Caco-2 (cell line): ENCODE measurements at regions of chr3 and their contacts with region 1.

Region 1: DNA sequence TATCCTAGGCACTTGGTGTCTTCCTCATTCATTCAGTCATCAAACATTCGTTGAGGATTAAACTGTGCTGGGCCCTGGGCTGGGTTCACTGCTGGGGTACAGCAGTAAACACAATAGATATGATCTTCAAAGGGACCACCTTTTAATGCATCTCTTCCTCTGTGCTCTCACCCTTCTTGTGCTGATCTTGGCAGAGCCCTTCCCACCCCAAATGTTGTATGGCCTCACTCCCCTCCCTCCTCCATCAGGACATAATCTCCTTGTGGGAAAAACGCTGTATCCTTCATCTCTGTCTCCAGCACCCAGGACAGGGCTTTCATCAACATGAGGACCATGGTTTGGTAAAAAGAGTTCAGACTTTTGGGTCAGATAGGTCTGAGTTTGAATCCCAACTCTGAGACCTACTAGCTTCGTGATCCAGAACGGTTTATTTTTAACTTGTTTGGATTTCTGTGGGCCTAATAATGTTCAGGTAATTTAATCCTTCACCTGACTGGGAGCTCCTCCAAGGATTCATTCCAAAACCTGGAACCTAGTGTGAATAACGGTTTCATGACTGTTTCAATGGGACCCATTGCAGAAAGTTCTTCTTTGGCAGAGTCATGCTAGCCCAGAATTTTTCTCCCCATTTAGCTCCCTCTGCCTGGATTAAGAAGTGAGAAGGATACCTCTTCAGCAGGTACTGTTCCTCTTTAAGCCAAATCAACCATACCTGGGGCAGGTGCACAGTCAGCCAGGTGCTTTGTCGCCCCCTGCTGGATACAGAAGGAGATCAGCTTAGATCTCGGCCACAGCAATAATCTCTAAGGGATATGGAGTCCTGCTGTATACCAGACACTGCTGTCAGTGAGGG is 5.2 kb upstream of the WNT7A start:
- DNase-seq: peak; percentile 68 to 82
- H3K4me3 ChIP-seq: no peak overlapping the region
- H3K4me3 Mint-ChIP-seq: no peak overlapping the region
- H3K27ac Mint-ChIP-seq: no peak overlapping the region
- H3K4me1 ChIP-seq: no peaks in the 10 kb centered on the region
- H3K4me1 Mint-ChIP-seq: no peaks in the 10 kb centered on the region
- H3K27me3 ChIP-seq: peaks cover 3% of the 10 kb centered on the region; the same call in 1 of the 2 replicates
- H3K27me3 Mint-ChIP-seq: peaks cover 33% of the 10 kb centered on the region
- CTCF ChIP-seq: peak; percentile 88 to 93

Region 2: GRCh38 chr3:13495921-13496723 is 389.0 kb before region 1 on chr3:
- CTCF ChIA-PET with region 1: no interaction called
- POLR2A ChIA-PET with region 1: no interaction called
- intact Hi-C with region 1: loop called (anchors 10 kb)
- DNase-seq: peak; percentile 65 to 83
- H3K4me3 ChIP-seq: no peak overlapping the region
- H3K4me3 Mint-ChIP-seq: no peak overlapping the region
- H3K27ac Mint-ChIP-seq: no peak overlapping the region
- H3K4me1 ChIP-seq: no peaks in the 10 kb centered on the region
- H3K4me1 Mint-ChIP-seq: no peaks in the 10 kb centered on the region
- H3K27me3 ChIP-seq: no peaks in the 10 kb centered on the region
- H3K27me3 Mint-ChIP-seq: no peaks in the 10 kb centered on the region
- CTCF ChIP-seq: peak; percentile 93 to 96

Region 3: DNA sequence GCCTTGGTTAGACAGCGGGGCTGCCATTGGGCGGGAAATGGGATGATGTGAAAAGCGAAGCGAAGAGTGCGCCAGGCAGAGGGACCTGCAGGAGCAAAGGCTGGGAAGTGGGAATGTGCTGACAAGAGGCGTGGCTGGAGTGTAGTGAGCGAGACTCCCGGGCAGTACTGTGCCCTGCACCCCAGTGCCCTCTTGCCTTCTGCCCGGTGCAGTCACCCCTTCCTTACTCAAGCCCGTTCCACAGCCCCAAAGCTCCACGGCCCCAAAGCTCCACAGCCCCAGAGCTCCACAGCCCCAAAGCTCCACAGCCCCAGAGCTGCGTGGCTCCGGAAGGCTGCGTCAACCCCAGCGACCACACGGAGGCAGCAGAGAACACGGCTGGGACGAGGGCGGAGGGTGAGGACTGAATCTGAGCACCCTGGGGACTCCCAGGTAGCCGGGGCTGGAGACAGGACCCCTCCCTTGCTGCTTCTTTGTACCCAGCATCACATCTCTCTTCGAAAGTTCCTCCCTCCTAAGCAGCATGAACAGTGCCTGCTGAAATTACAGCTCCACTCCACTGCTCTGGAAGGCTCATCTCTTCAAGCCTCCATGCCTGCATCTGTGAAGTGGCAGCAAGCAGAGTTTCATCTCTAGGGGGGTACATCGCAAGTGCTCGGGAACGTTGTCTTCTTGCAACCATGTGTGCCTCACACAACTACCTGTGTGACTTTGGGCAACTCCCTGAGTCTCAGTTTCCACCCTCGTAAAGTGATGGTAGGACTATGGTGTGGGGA is 227.2 kb before region 1 on chr3:
- CTCF ChIA-PET with region 1: interaction called, 73 read pairs
- POLR2A ChIA-PET with region 1: no interaction called
- intact Hi-C with region 1: loop called (anchors 1 kb)
- DNase-seq: peak; percentile 57 to 75
- H3K4me3 ChIP-seq: peak overlapping the region; percentile 18
- H3K4me3 Mint-ChIP-seq: peak overlapping the region; percentile 32
- H3K27ac Mint-ChIP-seq: no peak overlapping the region
- H3K4me1 ChIP-seq: peaks cover 7% of the 10 kb centered on the region; the same call in 1 of the 2 replicates
- H3K4me1 Mint-ChIP-seq: peaks cover 7% of the 10 kb centered on the region
- H3K27me3 ChIP-seq: no peaks in the 10 kb centered on the region
- H3K27me3 Mint-ChIP-seq: peaks cover 2% of the 10 kb centered on the region
- CTCF ChIP-seq: peak; percentile 73 to 95

Region 4: DNA sequence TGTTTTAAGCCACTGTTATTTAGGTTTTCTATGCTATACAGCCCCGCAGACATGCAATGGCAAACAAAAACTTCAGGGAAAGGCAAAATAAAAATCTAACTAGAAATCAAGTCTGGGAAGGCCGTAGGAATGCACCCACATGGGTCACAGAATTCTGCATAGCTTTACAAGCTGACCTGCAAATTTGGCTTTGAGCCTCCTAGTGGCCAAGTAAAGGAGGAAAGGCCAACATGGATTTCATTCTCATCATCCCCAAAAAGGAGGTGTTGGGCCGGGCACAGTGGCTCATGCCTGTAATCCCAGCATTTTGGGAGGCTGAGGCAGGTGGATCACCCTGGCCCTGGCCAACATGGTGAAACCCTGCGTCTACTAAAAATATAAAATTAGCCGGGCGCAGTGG is 211.9 kb before region 1 on chr3:
- CTCF ChIA-PET with region 1: interaction called, 3 read pairs
- POLR2A ChIA-PET with region 1: no interaction called
- intact Hi-C with region 1: loop called (anchors 1 kb)
- DNase-seq: no peak
- H3K4me3 ChIP-seq: no peak overlapping the region
- H3K4me3 Mint-ChIP-seq: no peak overlapping the region
- H3K27ac Mint-ChIP-seq: no peak overlapping the region
- H3K4me1 ChIP-seq: no peaks in the 10 kb centered on the region
- H3K4me1 Mint-ChIP-seq: no peaks in the 10 kb centered on the region
- H3K27me3 ChIP-seq: no peaks in the 10 kb centered on the region
- H3K27me3 Mint-ChIP-seq: peaks cover 9% of the 10 kb centered on the region
- CTCF ChIP-seq: peak; percentile 39 to 54

Region 5: GRCh38 chr3:13700889-13701288 is 184.2 kb before region 1 on chr3:
- CTCF ChIA-PET with region 1: interaction called, 3 read pairs
- POLR2A ChIA-PET with region 1: no interaction called
- intact Hi-C with region 1: loop called (anchors 1 kb)
- DNase-seq: peak in 1 of 2 experiments; percentile 10
- H3K4me3 ChIP-seq: no peak overlapping the region
- H3K4me3 Mint-ChIP-seq: no peak overlapping the region
- H3K27ac Mint-ChIP-seq: no peak overlapping the region
- H3K4me1 ChIP-seq: no peaks in the 10 kb centered on the region
- H3K4me1 Mint-ChIP-seq: no peaks in the 10 kb centered on the region
- H3K27me3 ChIP-seq: no peaks in the 10 kb centered on the region
- H3K27me3 Mint-ChIP-seq: peaks cover 13% of the 10 kb centered on the region
- CTCF ChIP-seq: no peak

Region 6: DNA sequence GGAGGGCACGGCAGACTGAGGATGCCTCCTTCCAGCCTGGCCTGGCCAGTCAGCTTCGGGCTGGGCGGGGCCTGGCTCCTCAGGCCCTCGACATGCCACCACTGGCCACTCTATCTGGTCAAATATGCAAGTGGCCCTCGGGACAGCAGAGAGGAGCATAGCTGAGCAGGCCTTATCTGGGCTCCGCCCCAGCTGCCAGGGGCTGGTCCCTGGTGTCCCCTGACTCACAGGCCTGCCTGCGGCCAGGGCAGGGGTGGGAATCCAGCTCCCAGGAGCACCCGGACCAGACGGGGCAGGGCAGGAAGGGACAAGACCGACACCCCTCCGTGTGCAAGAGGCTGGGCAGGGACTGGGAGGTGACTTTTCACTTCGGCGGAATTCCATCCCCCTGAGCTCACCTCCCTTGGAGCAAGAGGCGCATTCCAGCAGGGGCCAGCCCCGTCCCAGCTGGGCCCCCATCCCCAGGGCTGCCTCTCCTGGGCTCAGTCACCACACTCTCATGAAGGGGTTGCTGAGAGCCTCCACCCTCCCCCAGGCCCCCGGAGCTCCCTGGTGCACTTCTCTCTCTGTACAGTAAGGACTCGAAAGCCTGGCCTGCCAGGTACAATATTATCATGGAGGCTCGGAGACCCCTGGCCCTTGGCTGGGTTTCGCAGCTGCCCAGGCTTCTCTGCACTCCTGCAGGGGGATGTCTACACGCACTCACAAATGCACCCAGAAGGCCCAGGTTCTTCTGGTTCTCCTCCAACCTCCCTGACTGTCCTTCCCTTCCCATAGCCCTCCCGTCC is 34.7 kb before region 1 on chr3:
- CTCF ChIA-PET with region 1: interaction called, 3 read pairs
- POLR2A ChIA-PET with region 1: no interaction called
- intact Hi-C with region 1: loop called (anchors 1 kb)
- DNase-seq: peak; percentile 86 to 93
- H3K4me3 ChIP-seq: no peak overlapping the region
- H3K4me3 Mint-ChIP-seq: no peak overlapping the region
- H3K27ac Mint-ChIP-seq: peak overlapping the region; percentile 63
- H3K4me1 ChIP-seq: peaks cover 40% of the 10 kb centered on the region
- H3K4me1 Mint-ChIP-seq: peaks cover 18% of the 10 kb centered on the region
- H3K27me3 ChIP-seq: no peaks in the 10 kb centered on the region
- H3K27me3 Mint-ChIP-seq: no peaks in the 10 kb centered on the region
- CTCF ChIP-seq: no peak

Region 7: GRCh38 chr3:14371573-14372474 is 486.7 kb after region 1 on chr3:
- CTCF ChIA-PET with region 1: no interaction called
- POLR2A ChIA-PET with region 1: no interaction called
- intact Hi-C with region 1: no loop called
- DNase-seq: peak; percentile 48 to 64
- H3K4me3 ChIP-seq: no peak overlapping the region
- H3K4me3 Mint-ChIP-seq: peak overlapping the region; percentile 6
- H3K27ac Mint-ChIP-seq: peak overlapping the region; percentile 56
- H3K4me1 ChIP-seq: peaks cover 45% of the 10 kb centered on the region
- H3K4me1 Mint-ChIP-seq: peaks cover 33% of the 10 kb centered on the region
- H3K27me3 ChIP-seq: no peaks in the 10 kb centered on the region
- H3K27me3 Mint-ChIP-seq: no peaks in the 10 kb centered on the region
- CTCF ChIP-seq: no peak